ENCODE measurements at regions of chr7 and their contacts with region 1.

Region 1: DNA sequence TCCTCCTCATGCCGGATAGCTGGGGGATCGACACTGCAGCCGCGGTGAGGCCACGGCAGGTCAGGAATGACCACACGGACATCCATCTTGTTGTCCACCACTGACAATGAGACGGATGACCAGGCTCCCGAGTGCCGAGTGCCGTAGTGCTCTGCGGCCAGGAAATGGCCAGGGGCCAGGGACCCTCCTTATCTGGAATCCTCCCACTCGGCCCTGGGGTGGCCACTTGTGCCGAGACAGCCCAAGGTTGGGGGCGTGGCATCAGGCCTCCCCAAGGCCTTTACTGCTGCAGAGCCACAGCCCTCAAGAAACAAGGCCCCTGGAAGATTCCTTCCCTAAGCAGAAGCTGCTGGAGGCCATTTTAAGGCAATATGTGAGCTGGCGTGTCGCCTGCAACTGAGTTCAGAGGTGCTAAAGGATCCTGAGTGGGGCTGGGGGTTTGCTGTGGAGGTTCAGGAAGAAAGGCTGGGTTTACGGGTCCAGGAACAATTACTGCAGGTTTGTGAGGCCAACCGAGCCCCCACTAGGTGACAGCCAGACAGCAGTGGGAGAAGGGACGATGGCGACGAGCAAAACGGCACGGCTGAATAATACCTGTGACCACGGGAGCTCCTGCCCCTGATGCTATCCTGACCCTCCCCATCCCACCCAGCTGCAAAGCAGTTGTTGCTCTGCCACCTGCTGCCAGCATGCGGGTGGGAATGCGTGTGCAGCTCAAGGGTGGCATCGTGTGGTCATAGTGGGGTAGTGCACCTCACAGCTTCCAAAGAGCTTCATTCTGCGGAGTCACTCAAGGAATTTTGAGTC is 31.6 kb upstream of the LEP start:
- DNase-seq: peak; percentile 81 to 91
- ATAC-seq: peak; percentile 76 to 84
- H3K4me3 ChIP-seq: no peak overlapping the region
- H3K27ac ChIP-seq: no peak overlapping the region
- H3K4me1 ChIP-seq: no peaks in the 10 kb centered on the region
- CTCF ChIP-seq: peak; percentile 98
- EP300 ChIP-seq: no peak
- POLR2A ChIP-seq: no peak
- RAD21 ChIP-seq: peak; percentile 98 to 99

Region 2: GRCh38 chr7:127717502-127718339 is 491.7 kb before region 1 on chr7:
- CTCF ChIA-PET with region 1: interaction called, 13 read pairs
- POLR2A ChIA-PET with region 1: no interaction called
- DNase-seq: no peak
- ATAC-seq: no peak
- H3K4me3 ChIP-seq: no peak overlapping the region
- H3K27ac ChIP-seq: no peak overlapping the region
- H3K4me1 ChIP-seq: no peaks in the 10 kb centered on the region
- CTCF ChIP-seq: no peak
- EP300 ChIP-seq: no peak
- POLR2A ChIP-seq: no peak
- RAD21 ChIP-seq: no peak

Region 3: DNA sequence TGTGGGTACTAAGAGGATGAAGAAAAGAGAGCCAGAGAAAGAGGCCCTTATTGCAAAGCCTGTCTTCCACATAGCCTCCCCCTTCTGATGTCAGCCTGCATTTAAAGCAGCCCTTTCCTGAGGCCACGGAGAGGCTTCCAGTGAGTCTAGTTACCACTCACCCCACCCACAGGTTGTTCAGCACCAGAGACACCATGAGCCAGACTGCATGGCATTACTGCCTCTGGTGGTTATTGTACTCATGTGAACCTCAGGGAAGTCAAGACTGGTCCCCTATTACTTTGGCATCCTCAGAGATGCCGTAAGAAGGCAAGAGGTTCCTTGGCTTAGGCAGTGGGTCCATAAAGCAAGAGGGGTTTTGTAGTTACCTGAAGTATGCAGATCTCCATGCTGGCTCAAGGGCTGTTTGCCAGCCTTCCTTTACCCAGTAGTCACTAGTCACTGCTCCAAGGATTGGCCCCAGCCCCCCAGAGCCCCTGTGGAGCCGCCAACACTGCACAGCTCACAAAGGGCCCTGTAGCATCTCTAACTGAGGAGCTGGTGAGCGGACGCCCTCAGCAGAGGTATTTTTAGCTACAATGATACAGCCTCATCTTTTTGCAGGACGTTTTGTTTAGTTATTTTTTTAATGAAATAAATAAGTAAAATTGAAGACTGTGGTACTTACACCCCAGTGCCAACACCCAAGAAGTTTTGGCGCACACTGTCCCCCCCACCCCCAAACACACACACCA is 198.9 kb before region 1 on chr7:
- CTCF ChIA-PET with region 1: no interaction called
- POLR2A ChIA-PET with region 1: no interaction called
- DNase-seq: no peak
- ATAC-seq: peak; percentile 71 to 78
- H3K4me3 ChIP-seq: no peak overlapping the region
- H3K27ac ChIP-seq: no peak overlapping the region
- H3K4me1 ChIP-seq: no peaks in the 10 kb centered on the region
- CTCF ChIP-seq: no peak
- EP300 ChIP-seq: no peak
- POLR2A ChIP-seq: no peak
- RAD21 ChIP-seq: no peak

Region 4: GRCh38 chr7:128129224-128129864 is 80.1 kb before region 1 on chr7:
- CTCF ChIA-PET with region 1: interaction called, 202 read pairs
- POLR2A ChIA-PET with region 1: no interaction called
- DNase-seq: no peak
- ATAC-seq: no peak
- H3K4me3 ChIP-seq: no peak overlapping the region
- H3K27ac ChIP-seq: no peak overlapping the region
- H3K4me1 ChIP-seq: no peaks in the 10 kb centered on the region
- CTCF ChIP-seq: no peak
- EP300 ChIP-seq: no peak
- POLR2A ChIP-seq: no peak
- RAD21 ChIP-seq: no peak

Region 5: DNA sequence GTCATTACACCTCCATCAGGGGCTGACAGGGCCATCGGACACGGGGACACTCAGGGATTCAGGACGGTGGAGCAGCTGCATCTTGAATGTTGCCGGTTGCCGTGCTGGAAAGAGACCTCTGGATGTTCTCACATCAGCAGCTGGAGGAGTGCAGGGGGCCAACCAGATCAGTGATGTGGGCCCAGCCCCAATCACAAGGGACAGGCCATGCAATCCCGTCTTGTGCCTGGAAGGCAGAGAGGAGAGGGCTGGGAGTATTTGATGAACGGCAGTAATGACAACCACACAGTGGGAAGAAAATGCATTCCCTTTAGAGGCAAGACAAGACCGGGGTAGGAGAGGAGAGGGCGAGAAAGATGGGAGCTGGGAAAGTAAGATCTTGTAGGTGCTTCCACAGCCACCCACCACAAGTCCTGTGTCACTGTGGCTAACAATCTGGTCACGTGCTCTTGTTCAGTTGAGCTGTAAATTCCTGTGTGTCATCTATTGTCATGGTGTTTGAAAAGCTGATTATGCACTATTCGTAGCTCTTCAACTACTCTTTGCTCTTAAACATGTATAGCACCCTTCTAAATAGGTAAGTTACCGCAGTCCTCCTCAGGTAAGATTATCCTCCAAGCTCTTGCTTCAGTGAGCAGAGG is 54.2 kb before region 1 on chr7:
- CTCF ChIA-PET with region 1: interaction called, 18 read pairs
- POLR2A ChIA-PET with region 1: no interaction called
- DNase-seq: no peak
- ATAC-seq: no peak
- H3K4me3 ChIP-seq: no peak overlapping the region
- H3K27ac ChIP-seq: no peak overlapping the region
- H3K4me1 ChIP-seq: no peaks in the 10 kb centered on the region
- CTCF ChIP-seq: no peak
- EP300 ChIP-seq: no peak
- POLR2A ChIP-seq: no peak
- RAD21 ChIP-seq: no peak

Region 6: DNA sequence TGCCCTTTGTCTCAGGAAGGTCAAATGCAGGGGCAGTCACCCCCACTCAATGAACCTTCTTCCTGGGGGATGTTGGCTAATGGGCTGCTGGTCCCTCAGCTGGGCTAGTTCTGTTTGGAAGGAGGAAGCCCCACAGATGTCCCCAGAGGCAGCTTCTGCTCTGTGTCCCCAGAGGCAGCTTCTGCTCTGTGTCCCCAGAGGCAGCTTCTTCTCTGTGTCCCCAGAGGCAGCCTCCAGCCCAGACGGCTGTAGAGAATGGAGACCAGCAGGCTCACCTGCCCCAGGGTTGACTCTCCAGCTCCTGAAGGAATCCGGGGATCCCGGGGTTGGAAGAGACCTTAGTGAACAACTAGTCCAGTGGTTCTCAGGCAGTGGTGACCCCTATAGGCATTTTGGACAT is 30.8 kb before region 1 on chr7:
- CTCF ChIA-PET with region 1: interaction called, 12 read pairs
- POLR2A ChIA-PET with region 1: no interaction called
- DNase-seq: no peak
- ATAC-seq: 0 out of 6 replicates have a peak, but pooled peaks of 1 of the 2 experiments have one; percentile 26
- H3K4me3 ChIP-seq: no peak overlapping the region
- H3K27ac ChIP-seq: no peak overlapping the region
- H3K4me1 ChIP-seq: no peaks in the 10 kb centered on the region
- CTCF ChIP-seq: no peak
- EP300 ChIP-seq: no peak
- POLR2A ChIP-seq: no peak
- RAD21 ChIP-seq: no peak

Region 7: DNA sequence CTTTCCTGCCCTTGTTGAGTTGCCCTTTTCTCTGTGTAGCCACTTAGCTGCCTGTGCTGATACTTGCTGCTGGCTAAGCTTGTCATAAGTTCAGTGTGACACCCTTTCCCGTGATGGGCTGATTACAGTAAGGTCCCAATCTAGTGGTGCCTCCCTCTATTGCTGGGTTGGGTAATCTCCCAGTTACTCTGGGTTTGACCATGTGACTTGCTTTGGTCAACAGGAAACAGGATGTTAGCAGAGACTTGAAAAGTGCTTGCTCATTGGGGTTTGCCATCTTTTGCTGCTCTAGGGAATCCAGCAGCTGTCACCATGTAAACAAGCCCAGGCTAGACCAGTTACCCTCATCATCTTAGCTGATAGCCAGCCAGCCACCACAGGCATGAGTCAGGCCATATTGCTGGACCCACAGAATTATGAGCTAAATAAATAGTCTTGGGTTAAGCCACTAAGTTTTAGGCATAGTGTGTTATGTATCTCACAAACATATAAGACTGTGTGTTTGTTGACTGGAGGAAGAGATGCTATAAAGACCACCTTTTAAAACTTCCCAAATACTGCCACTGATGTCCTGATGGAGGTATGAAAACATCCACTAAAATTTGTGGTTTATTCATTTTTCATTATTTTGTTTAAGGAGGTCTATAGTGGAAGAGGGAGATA is 27.6 kb after region 1 on chr7:
- CTCF ChIA-PET with region 1: interaction called, 15 read pairs
- POLR2A ChIA-PET with region 1: no interaction called
- DNase-seq: peak; percentile 32 to 87
- ATAC-seq: peak; percentile 71 to 82
- H3K4me3 ChIP-seq: no peak overlapping the region
- H3K27ac ChIP-seq: peak overlapping the region in 1 of 2 experiments; percentile 39; a peak in 3 of 6 replicates
- H3K4me1 ChIP-seq: peaks cover 10% of the 10 kb centered on the region; the same call in 2 of the 3 replicates
- CTCF ChIP-seq: no peak
- EP300 ChIP-seq: no peak
- POLR2A ChIP-seq: no peak
- RAD21 ChIP-seq: no peak

Region 8: DNA sequence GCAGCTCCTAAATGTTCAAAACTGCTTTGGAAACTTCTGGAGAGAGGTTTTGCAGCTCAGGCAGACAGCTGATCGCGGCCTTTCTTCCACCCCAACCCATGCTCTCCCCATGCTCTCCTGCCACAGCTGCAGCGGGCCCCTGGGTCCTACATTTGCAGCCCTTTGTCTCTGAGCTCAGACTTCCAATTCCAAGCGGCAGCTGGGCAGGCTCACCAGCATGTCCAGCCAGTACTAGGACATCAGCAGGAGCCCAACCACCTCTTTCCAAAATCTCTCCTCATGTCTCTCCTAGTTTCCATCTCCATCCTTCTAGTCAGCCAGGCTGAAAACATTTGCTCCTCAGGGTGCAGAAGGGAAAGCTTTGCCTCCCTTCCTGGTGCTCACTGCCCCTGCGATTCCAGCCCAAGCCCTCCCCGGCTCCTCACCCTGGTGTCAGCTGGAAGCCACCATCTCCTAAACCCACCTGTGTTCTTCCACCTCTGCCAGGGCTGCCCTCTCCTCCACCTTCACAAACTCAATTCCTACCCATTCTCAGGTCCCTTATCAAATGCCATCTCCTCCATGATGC is 37.8 kb after region 1 on chr7:
- CTCF ChIA-PET with region 1: no interaction called
- POLR2A ChIA-PET with region 1: no interaction called
- DNase-seq: no peak
- ATAC-seq: no peak; a peak in 3 of 6 replicates
- H3K4me3 ChIP-seq: no peak overlapping the region
- H3K27ac ChIP-seq: no peak overlapping the region
- H3K4me1 ChIP-seq: 0 out of 3 replicates have a peak, but pooled peaks cover 4% of the 10 kb centered on the region
- CTCF ChIP-seq: no peak
- EP300 ChIP-seq: no peak
- POLR2A ChIP-seq: no peak
- RAD21 ChIP-seq: no peak